ENCODE measurements at regions of chr6 and their contacts with region 1.

Region 1: DNA sequence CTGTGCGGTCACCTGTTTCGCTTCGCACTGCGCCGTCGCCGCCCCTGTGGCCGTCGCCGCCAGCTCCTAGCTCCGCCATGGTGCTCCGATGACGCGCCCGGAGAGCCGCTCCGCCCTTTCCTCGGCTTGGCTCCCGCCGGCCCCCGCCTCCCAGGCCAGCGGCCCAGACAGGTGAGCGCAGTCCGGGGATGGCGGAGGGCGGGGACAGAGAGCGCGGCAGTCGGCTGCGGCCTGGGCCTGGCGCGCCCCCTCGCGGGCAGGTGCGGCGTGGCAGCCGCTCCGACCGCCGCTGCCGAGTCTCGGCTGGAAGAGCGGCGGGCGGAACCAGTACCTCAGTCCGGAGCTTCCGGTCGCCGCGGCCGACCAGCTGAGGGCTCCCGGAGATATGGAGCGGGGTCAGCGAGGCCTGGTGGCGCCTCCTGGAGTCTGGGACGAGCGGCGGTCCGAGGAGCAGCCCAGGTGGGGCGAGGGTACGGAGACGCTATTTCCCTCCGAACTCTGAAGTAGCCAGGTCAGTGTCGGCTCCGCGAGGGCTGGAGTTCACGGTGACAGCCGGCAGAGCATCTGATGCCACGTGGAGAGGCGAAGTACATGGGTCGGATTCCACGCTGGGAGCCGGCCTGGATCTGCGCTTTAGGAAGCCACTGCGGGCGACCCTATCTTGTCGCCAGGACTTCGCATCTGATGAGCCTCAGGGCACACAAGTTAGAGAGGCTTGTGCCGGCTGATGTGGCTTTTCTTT is at the start of gene MAP7:
- DNase-seq: no peak
- H3K4me3 ChIP-seq: peak within 1 kb of the TSS; percentile 66
- CTCF ChIP-seq: peak; percentile 40

Region 2: GRCh38 chr6:136249811-136250685 is 300.5 kb before region 1 on chr6 and contains the start of gene MTFR2:
- CTCF ChIA-PET with region 1: no interaction called
- POLR2A ChIA-PET with region 1: no interaction called
- DNase-seq: peak; percentile 95
- H3K4me3 ChIP-seq: peak within 1 kb of the TSS; percentile 96
- CTCF ChIP-seq: no peak

Region 3: DNA sequence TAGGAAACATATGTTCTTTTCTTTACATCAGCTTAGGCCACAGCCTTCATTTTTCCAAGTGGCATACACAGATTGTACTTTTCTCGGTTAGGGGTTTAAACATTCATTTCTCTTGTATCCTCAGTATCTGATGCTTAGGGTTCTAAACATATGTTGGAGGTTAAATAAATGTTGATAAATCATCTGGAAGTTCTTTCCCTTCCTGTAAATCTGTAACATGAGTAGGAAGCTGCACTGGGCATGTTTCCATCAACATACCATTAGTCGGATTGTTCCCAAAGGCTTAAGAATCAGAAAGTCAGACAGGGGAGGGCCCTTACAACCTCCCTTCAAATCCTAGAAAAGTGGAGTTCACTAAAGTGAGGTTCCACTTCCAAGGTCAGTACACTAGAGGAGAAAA is 206.1 kb before region 1 on chr6:
- CTCF ChIA-PET with region 1: interaction called, 11 read pairs
- POLR2A ChIA-PET with region 1: no interaction called
- DNase-seq: peak; percentile 46
- H3K4me3 ChIP-seq: no peak overlapping the region
- CTCF ChIP-seq: no peak

Region 4: GRCh38 chr6:136378886-136379285 is 171.6 kb before region 1 on chr6:
- CTCF ChIA-PET with region 1: interaction called, 10 read pairs
- POLR2A ChIA-PET with region 1: no interaction called
- DNase-seq: no peak
- H3K4me3 ChIP-seq: no peak overlapping the region
- CTCF ChIP-seq: no peak

Region 5: DNA sequence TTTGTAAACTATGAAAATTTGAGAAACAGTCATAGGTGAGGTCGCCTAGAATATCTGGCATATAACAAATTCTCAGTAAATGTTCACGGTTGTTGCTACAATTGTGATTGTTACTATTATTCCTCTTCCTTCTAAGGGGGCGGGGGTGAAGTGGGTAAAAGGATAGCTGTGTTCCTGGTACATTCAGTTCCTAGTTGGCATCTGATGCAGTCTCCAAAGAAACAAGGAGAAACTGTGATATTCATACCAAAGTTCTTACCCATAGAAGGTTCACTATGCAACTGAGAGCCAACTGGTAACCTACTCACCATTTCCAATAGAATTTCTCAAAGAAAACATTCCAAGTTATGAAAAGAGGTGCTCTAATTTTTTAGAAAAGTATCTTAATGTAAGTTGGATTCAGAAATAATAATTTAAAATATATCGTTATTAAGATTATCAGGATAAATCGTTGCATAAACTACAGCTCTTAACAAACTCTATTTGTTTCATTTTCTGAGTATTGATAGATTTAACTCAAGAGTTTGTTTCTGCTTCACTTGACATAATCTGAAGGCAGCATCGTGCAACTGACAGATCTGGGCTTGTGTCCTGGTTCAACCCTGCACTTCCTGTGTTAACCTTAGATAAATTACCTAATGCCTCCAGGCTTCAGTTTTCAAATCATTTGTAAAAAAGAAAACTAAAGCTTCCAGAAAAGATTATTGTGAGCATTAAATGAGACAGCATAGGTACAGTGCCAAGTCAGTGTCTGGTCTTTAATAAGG is 13.1 kb after region 1 on chr6:
- CTCF ChIA-PET with region 1: interaction called, 12 read pairs
- POLR2A ChIA-PET with region 1: no interaction called
- DNase-seq: no peak
- H3K4me3 ChIP-seq: no peak overlapping the region
- CTCF ChIP-seq: no peak

Region 6: DNA sequence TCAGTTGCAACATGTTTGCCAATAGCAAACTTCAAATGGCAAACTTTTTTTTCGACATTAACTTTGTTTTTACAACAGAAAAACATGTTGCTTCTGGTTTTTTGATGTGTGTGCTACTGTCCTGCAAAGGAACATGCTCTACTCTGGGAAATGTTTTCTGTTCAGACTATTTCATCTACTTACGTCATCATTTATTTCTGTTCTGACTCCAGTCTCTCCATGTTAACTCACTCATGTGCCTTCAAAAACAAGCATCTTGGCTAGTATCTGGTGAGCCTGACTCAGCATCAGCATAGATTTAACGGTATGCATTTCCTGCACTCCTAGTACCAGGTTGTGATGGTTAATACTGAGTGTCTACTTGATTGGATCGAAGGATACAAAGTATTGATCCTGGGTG is 35.8 kb after region 1 on chr6:
- CTCF ChIA-PET with region 1: no interaction called
- POLR2A ChIA-PET with region 1: no interaction called
- DNase-seq: peak; percentile 76
- H3K4me3 ChIP-seq: no peak overlapping the region
- CTCF ChIP-seq: no peak

Region 7: GRCh38 chr6:136643850-136644596 is 93.5 kb after region 1 on chr6:
- CTCF ChIA-PET with region 1: no interaction called
- POLR2A ChIA-PET with region 1: no interaction called
- DNase-seq: peak; percentile 46
- H3K4me3 ChIP-seq: no peak overlapping the region
- CTCF ChIP-seq: peak; percentile 86

Region 8: DNA sequence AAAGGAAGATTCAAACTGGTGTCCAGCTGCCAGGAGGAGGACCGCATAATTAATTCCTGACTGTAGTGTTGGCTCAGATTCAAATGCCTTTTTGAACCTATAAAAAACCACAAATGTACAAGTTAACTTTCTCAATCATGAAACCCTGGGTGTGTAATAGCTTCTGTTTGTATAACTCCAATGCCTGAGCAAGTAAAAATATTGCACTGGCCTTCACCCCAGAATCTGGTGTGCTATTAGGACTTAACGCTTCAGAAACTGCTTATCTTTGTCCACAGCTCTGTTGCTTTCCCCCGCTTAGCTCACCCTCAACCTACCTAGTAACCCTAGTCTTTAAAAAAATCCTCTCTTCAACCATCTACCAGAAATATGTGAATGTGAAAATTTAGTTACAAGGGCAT is 118.8 kb after region 1 on chr6:
- CTCF ChIA-PET with region 1: no interaction called
- POLR2A ChIA-PET with region 1: no interaction called
- DNase-seq: peak; percentile 80
- H3K4me3 ChIP-seq: no peak overlapping the region
- CTCF ChIP-seq: no peak